ENCODE measurements at regions of chr18 and their contacts with region 1.

Region 1: GRCh38 chr18:3261371-3262246 is at the start of gene MYL12B:
- DNase-seq: peak; percentile 58 to 92 (median 79)
- ATAC-seq: peak; percentile 69
- H3K4me3 ChIP-seq: peak within 1 kb of the TSS; percentile 72 to 80
- H3K4me3 Mint-ChIP-seq: peak within 1 kb of the TSS; percentile 90
- H3K27ac ChIP-seq: peak within 1 kb of the TSS; percentile 96 to 97
- H3K27ac Mint-ChIP-seq: peak within 1 kb of the TSS; percentile 100
- H3K4me1 ChIP-seq: peaks cover 52% of the 10 kb centered on the region
- H3K4me1 Mint-ChIP-seq: peaks cover 82% of the 10 kb centered on the region
- H3K27me3 ChIP-seq: no peaks in the 10 kb centered on the region
- H3K27me3 Mint-ChIP-seq: no peaks in the 10 kb centered on the region
- CTCF ChIP-seq: no peak
- total RNA-seq, gene MYL12B: 117 to 132 TPM

Region 2: GRCh38 chr18:2636126-2636631 is 625.4 kb before region 1 on chr18:
- CTCF ChIA-PET with region 1: no interaction called
- POLR2A ChIA-PET with region 1: interaction called, 3 read pairs
- intact Hi-C with region 1: loop called in 1 of 2 experiments (anchors 5 kb)
- DNase-seq: peak in 2 of 9 experiments; percentile 22 to 65
- ATAC-seq: peak; percentile 43
- H3K4me3 ChIP-seq: peak overlapping the region; percentile 41 to 44
- H3K4me3 Mint-ChIP-seq: peak overlapping the region; percentile 83
- H3K27ac ChIP-seq: peak overlapping the region; percentile 92 to 95
- H3K27ac Mint-ChIP-seq: peak overlapping the region; percentile 100
- H3K4me1 ChIP-seq: peaks cover 64% of the 10 kb centered on the region
- H3K4me1 Mint-ChIP-seq: peaks cover 88% of the 10 kb centered on the region
- H3K27me3 ChIP-seq: no peaks in the 10 kb centered on the region
- H3K27me3 Mint-ChIP-seq: no peaks in the 10 kb centered on the region
- CTCF ChIP-seq: no peak

Region 3: GRCh38 chr18:3012964-3013804 is 248.4 kb before region 1 on chr18 and contains the start of gene LPIN2:
- CTCF ChIA-PET with region 1: no interaction called
- POLR2A ChIA-PET with region 1: no interaction called
- intact Hi-C with region 1: loop called (anchors 5 kb)
- DNase-seq: peak; percentile 93 to 98 (median 95)
- ATAC-seq: peak; percentile 87
- H3K4me3 ChIP-seq: peak within 1 kb of the TSS; percentile 53
- H3K4me3 Mint-ChIP-seq: peak within 1 kb of the TSS; percentile 95
- H3K27ac ChIP-seq: peak within 1 kb of the TSS; percentile 73 to 79
- H3K27ac Mint-ChIP-seq: peak within 1 kb of the TSS; percentile 93
- H3K4me1 ChIP-seq: peaks cover 55% of the 10 kb centered on the region
- H3K4me1 Mint-ChIP-seq: peaks cover 64% of the 10 kb centered on the region
- H3K27me3 ChIP-seq: no peaks in the 10 kb centered on the region
- H3K27me3 Mint-ChIP-seq: no peaks in the 10 kb centered on the region
- CTCF ChIP-seq: no peak
- total RNA-seq, gene LPIN2: 50.3 to 50.9 TPM

Region 4: GRCh38 chr18:3245853-3246634 is 15.6 kb before region 1 on chr18:
- CTCF ChIA-PET with region 1: interaction called, 7 read pairs
- POLR2A ChIA-PET with region 1: interaction called, 131 read pairs
- intact Hi-C with region 1: loop called (anchors 1 kb)
- DNase-seq: peak; percentile 44 to 89 (median 78)
- ATAC-seq: peak; percentile 60
- H3K4me3 ChIP-seq: peak overlapping the region; percentile 77 to 90
- H3K4me3 Mint-ChIP-seq: peak overlapping the region; percentile 92
- H3K27ac ChIP-seq: peak overlapping the region; percentile 79 to 89
- H3K27ac Mint-ChIP-seq: peak overlapping the region; percentile 90
- H3K4me1 ChIP-seq: peaks cover 11% of the 10 kb centered on the region
- H3K4me1 Mint-ChIP-seq: peaks cover 39% of the 10 kb centered on the region
- H3K27me3 ChIP-seq: no peaks in the 10 kb centered on the region
- H3K27me3 Mint-ChIP-seq: no peaks in the 10 kb centered on the region
- CTCF ChIP-seq: peak; percentile 84

Region 5: DNA sequence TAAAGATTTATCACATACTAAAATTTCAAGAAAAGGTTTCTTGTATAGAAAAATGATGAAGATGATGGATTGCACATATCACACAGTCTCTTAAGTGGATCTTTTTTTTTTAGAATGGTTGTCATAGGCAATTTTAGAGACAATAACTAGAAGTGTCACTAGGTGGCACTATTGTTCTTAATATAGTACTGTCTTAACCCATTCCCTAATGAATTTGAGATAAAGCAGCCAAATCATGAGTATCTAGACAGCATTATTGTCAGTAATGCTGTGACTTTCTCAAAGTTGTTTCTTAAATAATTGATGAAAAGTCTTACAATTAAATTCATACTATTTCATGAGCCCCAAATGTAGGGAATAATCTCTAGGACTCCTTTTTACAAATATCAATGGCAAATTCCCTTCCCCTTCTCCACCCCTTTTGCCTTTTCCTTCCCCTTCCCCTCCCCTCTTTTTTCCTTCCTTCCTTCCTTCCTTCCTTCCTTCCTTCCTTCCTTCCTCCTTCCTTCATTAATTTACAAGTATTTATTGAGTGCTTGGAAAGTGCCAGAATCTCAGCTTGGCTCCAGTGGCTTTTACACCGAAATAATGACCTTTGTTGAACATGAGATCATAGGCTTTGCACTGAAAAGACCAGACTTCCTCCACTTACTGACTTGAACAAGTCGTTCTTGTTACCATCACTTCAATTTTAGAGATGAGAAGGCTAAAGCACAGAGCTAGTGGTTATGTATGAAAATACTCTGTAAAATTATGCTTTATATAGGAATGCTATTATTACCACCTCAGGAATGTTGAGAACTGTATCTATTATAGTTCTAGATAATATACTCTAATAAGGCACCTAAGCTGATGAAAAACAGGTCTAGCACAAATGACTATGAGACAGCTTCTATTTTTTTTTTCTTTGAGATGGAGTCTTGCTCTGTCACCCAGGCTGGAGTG is 20.1 kb after region 1 on chr18:
- CTCF ChIA-PET with region 1: interaction called, 5 read pairs
- POLR2A ChIA-PET with region 1: interaction called, 4 read pairs
- intact Hi-C with region 1: loop called in 1 of 2 experiments (anchors 1 kb)
- DNase-seq: peak in 2 of 9 experiments; percentile 77 to 84
- ATAC-seq: peak; percentile 93
- H3K4me3 ChIP-seq: no peak overlapping the region
- H3K4me3 Mint-ChIP-seq: no peak overlapping the region
- H3K27ac ChIP-seq: no peak overlapping the region
- H3K27ac Mint-ChIP-seq: no peak overlapping the region
- H3K4me1 ChIP-seq: no peaks in the 10 kb centered on the region
- H3K4me1 Mint-ChIP-seq: peaks cover 4% of the 10 kb centered on the region
- H3K27me3 ChIP-seq: no peaks in the 10 kb centered on the region
- H3K27me3 Mint-ChIP-seq: no peaks in the 10 kb centered on the region
- CTCF ChIP-seq: peak; percentile 75

Region 6: DNA sequence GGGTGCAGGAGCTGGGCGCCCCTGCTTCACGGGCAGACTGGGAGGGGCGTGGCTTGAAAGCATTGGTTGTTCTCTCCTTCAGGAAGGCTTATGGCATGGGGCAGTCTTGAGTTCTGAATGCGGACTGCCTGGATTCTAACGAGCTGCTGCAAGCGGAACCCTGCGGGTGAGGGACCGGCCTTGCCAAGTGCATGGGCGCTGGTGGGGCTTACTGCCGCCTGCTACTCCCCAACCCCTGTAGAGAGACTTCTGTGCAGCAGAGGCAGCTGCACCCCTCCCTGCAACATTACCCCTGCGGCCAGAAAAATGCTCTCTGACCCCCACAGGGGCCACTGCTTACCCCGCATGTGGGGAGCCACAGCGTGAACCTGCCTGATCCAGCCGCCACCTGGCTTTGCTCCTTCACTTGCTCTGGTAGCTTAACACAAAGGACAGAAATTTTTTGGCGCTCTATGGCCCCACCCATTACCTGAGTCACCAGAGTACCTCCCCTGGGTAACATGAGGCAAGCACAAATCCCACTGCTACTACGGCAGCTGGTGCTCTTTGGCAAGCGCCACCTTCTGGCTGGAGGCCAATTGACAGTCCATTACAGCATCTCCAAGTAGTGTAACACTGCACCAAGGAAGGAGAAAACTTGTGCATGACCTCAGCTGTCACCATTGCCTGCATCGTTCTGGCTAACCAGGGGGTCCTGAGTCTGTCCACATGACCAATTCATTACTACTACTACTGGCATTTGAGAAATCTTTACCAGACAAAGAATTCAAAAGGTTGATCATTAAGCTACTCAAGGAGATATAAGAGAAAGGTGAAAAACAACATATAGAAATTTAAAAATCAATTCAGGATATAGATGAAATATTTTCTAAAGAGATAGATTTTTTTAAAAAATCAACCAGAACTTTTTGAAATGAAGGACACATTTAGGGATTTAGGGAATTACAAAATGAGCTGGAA is 35.7 kb after region 1 on chr18:
- CTCF ChIA-PET with region 1: interaction called, 8 read pairs
- POLR2A ChIA-PET with region 1: interaction called, 16 read pairs
- intact Hi-C with region 1: loop called (anchors 2 to 5 kb)
- DNase-seq: peak; percentile 86 to 95 (median 93)
- ATAC-seq: peak; percentile 98
- H3K4me3 ChIP-seq: peak overlapping the region; percentile 71 to 87
- H3K4me3 Mint-ChIP-seq: peak overlapping the region; percentile 92
- H3K27ac ChIP-seq: peak overlapping the region; percentile 51 to 58
- H3K27ac Mint-ChIP-seq: peak overlapping the region; percentile 86
- H3K4me1 ChIP-seq: peaks cover 7% of the 10 kb centered on the region
- H3K4me1 Mint-ChIP-seq: peaks cover 8% of the 10 kb centered on the region
- H3K27me3 ChIP-seq: peaks cover 0 to 2% of the 10 kb centered on the region in 2 experiments
- H3K27me3 Mint-ChIP-seq: peaks cover 27% of the 10 kb centered on the region
- CTCF ChIP-seq: peak; percentile 79

Region 7: DNA sequence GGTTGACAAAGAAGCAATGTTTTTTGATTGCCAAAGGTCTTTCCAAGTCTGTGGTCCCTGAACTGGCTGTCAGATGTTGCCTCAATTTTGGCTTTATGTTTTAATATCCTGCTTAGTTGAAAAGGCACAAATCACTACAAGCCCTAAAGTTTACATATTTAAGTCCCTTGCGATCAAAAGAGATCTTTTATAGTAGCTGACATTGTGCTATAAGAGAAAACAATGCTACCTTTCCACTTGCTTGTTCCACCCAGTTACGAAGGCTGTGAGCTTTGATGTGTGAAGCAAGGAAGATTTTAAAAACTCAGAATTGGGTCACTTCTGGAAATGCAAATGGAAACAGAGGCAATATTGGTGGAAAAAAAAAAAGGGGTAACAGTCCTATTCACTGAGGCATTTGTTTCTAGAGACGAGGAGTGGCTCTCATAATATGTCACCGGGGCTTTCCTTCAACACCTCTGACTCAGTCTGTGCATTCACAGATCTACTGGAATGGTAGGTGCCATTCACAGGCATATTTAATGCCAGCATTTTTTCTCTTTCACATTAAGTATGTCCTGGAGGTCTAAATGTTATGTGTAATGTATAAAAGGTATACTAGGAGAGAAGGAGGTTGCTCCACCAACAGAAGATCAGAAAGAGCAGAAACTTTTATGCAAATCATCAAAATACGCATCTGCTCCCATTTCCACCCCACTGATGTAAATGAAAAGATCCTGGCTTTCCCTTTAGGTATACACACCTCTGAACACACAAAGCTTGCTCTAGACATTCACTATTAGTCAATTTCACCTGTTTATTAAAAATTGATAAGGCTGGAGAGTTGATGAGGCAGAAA is 280.2 kb after region 1 on chr18:
- CTCF ChIA-PET with region 1: no interaction called
- POLR2A ChIA-PET with region 1: no interaction called
- intact Hi-C with region 1: no loop called
- DNase-seq: no peak
- ATAC-seq: no peak
- H3K4me3 ChIP-seq: no peak overlapping the region
- H3K4me3 Mint-ChIP-seq: no peak overlapping the region
- H3K27ac ChIP-seq: no peak overlapping the region
- H3K27ac Mint-ChIP-seq: no peak overlapping the region
- H3K4me1 ChIP-seq: no peaks in the 10 kb centered on the region
- H3K4me1 Mint-ChIP-seq: no peaks in the 10 kb centered on the region
- H3K27me3 ChIP-seq: no peaks in the 10 kb centered on the region
- H3K27me3 Mint-ChIP-seq: no peaks in the 10 kb centered on the region
- CTCF ChIP-seq: no peak

Region 8: GRCh38 chr18:5237723-5238370 is 1976.2 kb after region 1 on chr18:
- CTCF ChIA-PET with region 1: no interaction called
- POLR2A ChIA-PET with region 1: no interaction called
- intact Hi-C with region 1: loop called in 1 of 2 experiments (anchors 5 kb)
- DNase-seq: peak; percentile 78 to 94 (median 85)
- ATAC-seq: peak; percentile 87
- H3K4me3 ChIP-seq: peak overlapping the region; percentile 82 to 85
- H3K4me3 Mint-ChIP-seq: peak overlapping the region; percentile 95
- H3K27ac ChIP-seq: peak overlapping the region; percentile 94 to 98
- H3K27ac Mint-ChIP-seq: peak overlapping the region; percentile 98
- H3K4me1 ChIP-seq: peaks cover 28% of the 10 kb centered on the region
- H3K4me1 Mint-ChIP-seq: peaks cover 53% of the 10 kb centered on the region
- H3K27me3 ChIP-seq: no peaks in the 10 kb centered on the region
- H3K27me3 Mint-ChIP-seq: no peaks in the 10 kb centered on the region
- CTCF ChIP-seq: no peak

Measured in CD8-positive, alpha-beta T cell (primary cell).